Activated T-helper 1 cell treated with anti-CD3 and anti-CD28 coated beads, Interleukin-12 subunit alpha, Interleukin-12 subunit beta, Interleukin-2, Interleukin-4 antibody, amounts not matched to agents 30 ng/mL and 10 ng/mL and 1 ng/mL, durations not matched to agents 14 hours and 24 hours and 36 hours (primary cell): ENCODE measurements at regions of chr1 and their contacts with region 1.

Region 1: DNA sequence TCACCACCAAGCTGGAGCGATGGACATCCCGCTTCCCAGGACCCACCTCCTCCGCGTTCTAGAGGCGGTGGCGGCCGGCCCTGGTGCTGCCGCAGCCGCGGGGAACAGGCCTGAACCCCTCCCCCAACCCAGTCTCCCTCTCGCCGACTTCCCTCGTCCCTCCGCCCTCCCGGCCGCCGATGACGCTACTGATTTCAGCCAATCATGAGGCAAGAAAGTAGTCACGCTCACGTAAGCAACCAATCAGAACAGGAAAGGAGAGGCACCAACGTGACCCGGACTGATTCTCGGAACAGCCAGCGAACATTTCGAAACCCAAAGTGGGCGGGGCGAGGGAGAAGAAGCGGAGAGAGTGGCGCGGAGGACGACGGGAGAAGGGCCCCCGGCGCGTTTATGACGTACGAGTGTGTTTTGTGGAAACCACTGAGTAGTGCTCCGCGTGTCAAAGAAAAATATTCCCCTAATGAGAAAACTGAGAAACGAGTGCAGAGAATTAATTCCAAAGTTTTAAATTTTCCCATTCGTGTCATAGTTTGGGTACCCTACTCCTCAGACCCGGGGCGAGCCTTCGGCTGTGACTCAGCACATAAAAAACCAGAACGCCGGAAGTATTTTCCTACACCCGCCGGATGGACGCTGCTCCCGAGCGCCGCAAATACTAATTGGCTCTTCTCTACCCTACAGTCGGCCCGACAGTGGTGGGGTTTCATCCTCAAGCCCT is at the start of gene NRDC:
- DNase-seq: peak; percentile 99
- H3K4me3 Mint-ChIP-seq: no peak within 1 kb of the TSS
- H3K27ac Mint-ChIP-seq: no peak within 1 kb of the TSS
- H3K4me1 Mint-ChIP-seq: no peaks in the 10 kb centered on the region
- H3K27me3 Mint-ChIP-seq: peaks cover 14% of the 10 kb centered on the region
- total RNA-seq, gene NRDC: 177 and 185 TPM in 2 replicates

Region 2: DNA sequence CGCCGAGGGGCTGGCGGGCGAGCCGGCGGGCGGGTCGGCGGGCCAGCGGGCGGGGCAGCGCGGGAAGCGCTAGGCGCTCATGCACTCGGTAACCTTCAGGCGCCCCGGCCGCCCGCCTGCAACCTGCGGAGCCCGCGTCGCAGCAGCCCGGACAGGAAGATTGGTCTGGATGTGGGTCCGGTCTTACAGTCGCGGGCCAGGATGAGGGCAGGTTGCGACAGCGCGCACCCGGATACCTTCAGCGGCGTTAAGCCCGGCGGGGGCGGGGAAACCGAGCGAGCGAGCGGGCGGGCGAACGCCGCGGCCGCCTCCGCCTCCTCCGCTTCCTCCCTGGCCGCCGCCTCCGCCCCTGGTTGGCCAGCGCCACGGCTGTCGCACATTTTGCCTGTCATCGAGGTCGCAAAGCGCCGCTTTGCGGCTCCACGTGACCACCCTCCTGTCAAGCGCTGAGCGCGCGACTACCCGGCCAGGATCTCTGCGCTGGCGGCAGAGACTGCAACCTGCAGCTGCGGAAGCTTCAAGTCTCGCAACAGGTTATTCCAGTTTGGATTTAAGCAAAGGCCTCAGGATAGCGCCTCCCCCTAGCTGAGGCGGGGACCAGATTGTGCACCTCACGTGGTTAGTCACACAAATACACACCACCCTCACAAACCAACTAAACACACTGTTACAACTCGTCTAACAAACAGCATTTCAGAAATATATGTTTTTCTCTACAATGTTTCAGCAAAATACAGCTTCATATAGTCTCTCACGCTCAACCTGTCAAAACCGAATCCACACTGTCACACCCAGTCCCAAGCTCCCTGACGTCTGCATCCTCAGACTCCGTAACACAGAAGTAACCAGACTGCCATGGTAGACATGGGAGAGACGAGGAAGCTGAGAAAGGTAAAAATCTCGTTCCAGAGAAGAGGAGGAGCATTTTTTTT is 918.6 kb before region 1 on chr1 and contains the start of gene FAF1:
- intact Hi-C with region 1: loop called (anchors 5 kb)
- DNase-seq: peak; percentile 98
- H3K4me3 Mint-ChIP-seq: peak within 1 kb of the TSS; percentile 94
- H3K27ac Mint-ChIP-seq: peak within 1 kb of the TSS; percentile 98
- H3K4me1 Mint-ChIP-seq: peaks cover 23% of the 10 kb centered on the region
- H3K27me3 Mint-ChIP-seq: peaks cover 8% of the 10 kb centered on the region
- total RNA-seq, gene FAF1: 58.8 and 62.0 TPM in 2 replicates

Region 3: DNA sequence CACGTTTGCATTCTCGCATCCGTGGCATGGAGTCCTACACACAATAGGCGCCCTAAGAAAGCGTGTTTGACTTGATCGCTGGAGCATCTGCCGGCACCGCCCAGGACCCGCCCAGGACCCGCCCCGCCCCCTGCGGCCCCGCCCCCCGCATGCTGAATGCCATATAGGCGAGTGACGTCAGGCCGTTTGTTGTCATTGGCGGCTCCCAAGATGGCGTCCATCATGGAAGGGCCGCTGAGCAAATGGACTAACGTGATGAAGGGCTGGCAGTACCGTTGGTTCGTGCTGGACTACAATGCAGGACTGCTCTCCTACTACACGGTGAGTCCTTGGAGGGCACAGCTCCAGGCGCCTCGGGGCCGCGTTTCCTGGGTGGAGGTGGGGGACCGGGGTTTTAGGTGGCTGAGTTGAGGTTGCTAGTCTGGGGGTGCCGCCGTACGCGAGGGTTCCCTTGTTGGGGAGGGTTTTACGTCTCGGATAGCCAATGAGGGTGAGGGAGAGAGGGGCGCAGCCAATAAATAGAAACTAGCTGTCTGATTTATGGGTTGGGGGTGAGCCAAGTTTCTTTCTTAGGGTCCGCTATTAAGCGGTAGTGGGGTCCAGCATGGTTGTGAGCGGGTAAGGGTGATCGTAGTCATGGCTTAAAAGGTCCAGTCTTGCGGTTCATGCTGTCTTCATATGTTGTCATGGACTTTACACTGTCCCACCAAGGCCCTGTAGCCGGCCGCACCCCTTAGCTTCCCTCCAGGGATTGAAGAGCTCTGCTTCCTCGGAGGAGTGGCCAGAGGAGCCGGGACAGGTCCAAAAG is 261.7 kb before region 1 on chr1 and contains the start of gene OSBPL9:
- intact Hi-C with region 1: loop called (anchors 1 kb)
- DNase-seq: peak; percentile 79
- H3K4me3 Mint-ChIP-seq: peak within 1 kb of the TSS; percentile 100
- H3K27ac Mint-ChIP-seq: peak within 1 kb of the TSS; percentile 98
- H3K4me1 Mint-ChIP-seq: peaks cover 22% of the 10 kb centered on the region
- H3K27me3 Mint-ChIP-seq: peaks cover 5% of the 10 kb centered on the region
- total RNA-seq, gene OSBPL9: 48.1 and 48.8 TPM in 2 replicates

Region 4: GRCh38 chr1:51863384-51863783 is 15.4 kb before region 1 on chr1:
- intact Hi-C with region 1: loop called (anchors 2 kb)
- DNase-seq: no peak
- H3K4me3 Mint-ChIP-seq: no peak overlapping the region
- H3K27ac Mint-ChIP-seq: no peak overlapping the region
- H3K4me1 Mint-ChIP-seq: peaks cover 37% of the 10 kb centered on the region
- H3K27me3 Mint-ChIP-seq: no peaks in the 10 kb centered on the region

Region 5: GRCh38 chr1:51926171-51926812 is 47.5 kb after region 1 on chr1:
- intact Hi-C with region 1: no loop called
- DNase-seq: no peak
- H3K4me3 Mint-ChIP-seq: no peak overlapping the region
- H3K27ac Mint-ChIP-seq: no peak overlapping the region
- H3K4me1 Mint-ChIP-seq: no peaks in the 10 kb centered on the region
- H3K27me3 Mint-ChIP-seq: peaks cover 3% of the 10 kb centered on the region

Region 6: GRCh38 chr1:52141513-52142219 is 262.9 kb after region 1 on chr1 and contains the start of gene ZFYVE9:
- intact Hi-C with region 1: loop called (anchors 5 kb)
- DNase-seq: peak; percentile 60
- H3K4me3 Mint-ChIP-seq: peak within 1 kb of the TSS; percentile 80
- H3K27ac Mint-ChIP-seq: peak within 1 kb of the TSS; percentile 67
- H3K4me1 Mint-ChIP-seq: peaks cover 34% of the 10 kb centered on the region
- H3K27me3 Mint-ChIP-seq: peaks cover 46% of the 10 kb centered on the region
- total RNA-seq, gene ZFYVE9: 3.2 and 4.1 TPM in 2 replicates